Colonic mucosa (tissue), 4 donors: ENCODE measurements at regions of chr17 and their contacts with region 1.

Region 1: GRCh38 chr17:13222949-13223348 is 205.1 kb upstream of the ELAC2 start:
- DNase-seq: peak; percentile 19
- H3K4me3 ChIP-seq: no peak overlapping the region
- H3K27ac ChIP-seq: no peak overlapping the region
- H3K4me1 ChIP-seq: no peaks in the 10 kb centered on the region
- H3K27me3 ChIP-seq: no peaks in the 10 kb centered on the region
- CTCF ChIP-seq: no peak

Region 2: DNA sequence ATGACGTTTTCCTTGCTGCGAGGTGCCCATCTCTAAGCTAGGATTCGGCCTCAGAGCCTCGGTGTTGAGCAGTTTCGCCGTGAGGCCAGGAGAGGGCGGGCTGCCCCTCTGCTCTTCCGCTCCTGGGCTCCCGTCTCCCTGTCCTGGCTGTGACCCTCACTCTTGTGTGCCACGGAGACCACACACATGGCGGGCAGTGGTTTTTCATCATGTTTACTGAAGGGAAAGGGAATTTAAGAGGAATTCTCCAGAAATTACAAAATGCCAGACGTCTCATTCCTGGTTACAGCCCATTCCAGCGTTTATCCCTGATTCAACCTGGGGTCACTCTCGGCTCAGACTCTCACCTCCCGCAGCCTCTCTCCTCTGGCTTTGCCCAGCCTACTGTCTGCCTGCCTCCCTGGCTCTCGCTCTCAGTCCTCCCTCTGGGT is 108.3 kb before region 1 on chr17:
- intact Hi-C with region 1: loop called (anchors 10 kb)
- DNase-seq: peak; percentile 19
- H3K4me3 ChIP-seq: no peak overlapping the region
- H3K27ac ChIP-seq: no peak overlapping the region
- H3K4me1 ChIP-seq: no peaks in the 10 kb centered on the region
- H3K27me3 ChIP-seq: no peaks in the 10 kb centered on the region
- CTCF ChIP-seq: peak; percentile 56

Region 3: GRCh38 chr17:13283606-13284005 is 60.7 kb after region 1 on chr17:
- intact Hi-C with region 1: no loop called
- DNase-seq: no peak
- H3K4me3 ChIP-seq: no peak overlapping the region
- H3K27ac ChIP-seq: no peak overlapping the region
- H3K4me1 ChIP-seq: no peaks in the 10 kb centered on the region
- H3K27me3 ChIP-seq: no peaks in the 10 kb centered on the region
- CTCF ChIP-seq: no peak